ENCODE measurements at regions of chr2 and their contacts with region 1.

Region 1: DNA sequence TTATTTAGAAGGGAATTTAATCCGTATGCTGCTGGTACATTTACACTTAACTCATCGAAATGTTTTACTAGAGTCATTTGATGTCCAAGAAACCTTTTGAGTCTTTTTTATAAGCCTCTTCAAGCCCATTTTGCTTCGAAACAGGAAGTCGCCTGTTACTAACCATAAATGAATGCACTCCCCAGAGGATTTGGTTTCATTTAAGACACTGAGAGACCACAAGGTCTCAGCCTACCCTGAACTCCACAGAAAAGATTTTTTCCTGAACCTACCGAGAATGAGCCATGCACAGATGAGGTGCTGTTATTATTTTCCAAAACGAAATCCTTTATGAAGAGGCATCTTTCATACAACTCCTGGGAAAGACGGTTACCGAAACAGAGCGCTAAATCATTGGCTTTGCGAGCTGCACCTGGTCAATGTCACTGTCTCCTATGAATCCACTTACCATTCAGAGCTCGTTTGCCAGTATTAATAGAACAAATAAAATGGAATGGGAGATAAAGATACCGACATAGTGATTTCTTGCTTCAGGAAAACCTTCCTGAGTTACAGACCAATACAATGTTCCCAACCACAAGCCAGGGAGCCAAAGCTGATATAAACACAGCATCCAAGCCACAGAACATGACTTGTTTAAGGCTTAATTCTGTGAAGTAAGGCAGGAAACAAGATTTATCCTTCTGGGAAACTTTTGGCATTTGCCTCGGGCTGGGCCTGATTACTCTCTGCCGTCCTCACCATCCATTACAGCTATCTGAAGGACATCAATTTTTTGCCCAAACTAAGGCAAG is 382.1 kb downstream of the OSR1 start:
- DNase-seq: peak; percentile 75
- H3K4me3 ChIP-seq: peak overlapping the region in 3 of 4 donors; percentile 5 to 23 (median 7)
- H3K27ac ChIP-seq: peak overlapping the region; percentile 67 to 81 (median 77)
- H3K4me1 ChIP-seq: peaks cover 0 to 44% (median 37%) of the 10 kb centered on the region in 4 donors
- H3K27me3 ChIP-seq: no peaks in the 10 kb centered on the region
- CTCF ChIP-seq: no peak
- EP300 ChIP-seq: peak; percentile 0 to 75 (median 58)
- POLR2A ChIP-seq: no peak

Region 2: DNA sequence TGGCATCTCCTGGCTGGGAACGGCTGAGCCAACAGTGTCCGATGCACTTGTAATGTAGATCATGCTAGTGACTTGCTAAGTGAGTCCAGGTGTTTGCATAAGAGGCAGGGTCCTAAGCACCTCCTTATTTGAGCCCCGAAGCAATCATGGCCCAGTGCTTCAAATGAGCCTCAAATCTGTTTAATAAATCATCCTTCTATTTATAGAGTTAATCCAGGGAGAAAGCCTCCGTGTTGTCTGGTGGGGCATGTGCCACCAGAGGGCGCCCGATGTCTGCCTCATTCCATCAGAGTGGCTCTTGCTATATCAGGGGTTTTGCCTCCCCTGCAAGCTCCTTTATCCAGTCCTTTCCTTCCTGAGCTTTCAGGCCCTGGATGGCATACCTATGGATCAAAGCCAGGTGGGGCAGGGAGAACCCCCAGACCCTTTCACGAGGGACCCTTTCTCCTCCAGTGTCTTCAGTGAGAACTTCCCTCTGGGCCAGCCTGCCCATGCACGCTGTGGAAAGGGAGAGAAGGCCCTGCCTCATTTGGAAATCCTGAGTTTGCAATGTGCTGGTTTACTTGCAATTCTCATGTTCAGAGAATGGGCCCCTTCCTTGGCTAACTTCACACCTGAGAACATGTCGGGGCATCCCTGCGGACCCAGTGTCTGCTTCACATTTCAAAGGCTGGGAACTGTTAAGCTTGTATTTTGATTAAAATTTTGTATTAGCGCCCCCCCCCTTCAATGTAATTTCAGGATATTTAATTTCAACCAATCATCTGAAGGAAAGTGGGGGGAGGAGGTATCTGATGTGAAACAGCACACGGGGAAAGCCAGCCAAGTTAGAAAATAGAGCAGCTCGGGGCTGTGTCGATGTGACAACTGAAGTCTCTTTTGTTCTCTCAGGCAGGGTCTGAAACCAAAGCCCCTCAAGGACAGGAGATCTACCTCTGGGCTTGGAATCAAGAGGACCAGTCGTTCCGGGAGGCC is 455.6 kb before region 1 on chr2:
- intact Hi-C with region 1: loop called (anchors 5 kb)
- DNase-seq: peak; percentile 93
- H3K4me3 ChIP-seq: no peak overlapping the region
- H3K27ac ChIP-seq: peak overlapping the region; percentile 57 to 78 (median 73)
- H3K4me1 ChIP-seq: peaks cover 0 to 50% (median 48%) of the 10 kb centered on the region in 4 donors
- H3K27me3 ChIP-seq: no peaks in the 10 kb centered on the region
- CTCF ChIP-seq: peak; percentile 81 to 91 (median 88)
- EP300 ChIP-seq: no peak
- POLR2A ChIP-seq: no peak

Region 3: DNA sequence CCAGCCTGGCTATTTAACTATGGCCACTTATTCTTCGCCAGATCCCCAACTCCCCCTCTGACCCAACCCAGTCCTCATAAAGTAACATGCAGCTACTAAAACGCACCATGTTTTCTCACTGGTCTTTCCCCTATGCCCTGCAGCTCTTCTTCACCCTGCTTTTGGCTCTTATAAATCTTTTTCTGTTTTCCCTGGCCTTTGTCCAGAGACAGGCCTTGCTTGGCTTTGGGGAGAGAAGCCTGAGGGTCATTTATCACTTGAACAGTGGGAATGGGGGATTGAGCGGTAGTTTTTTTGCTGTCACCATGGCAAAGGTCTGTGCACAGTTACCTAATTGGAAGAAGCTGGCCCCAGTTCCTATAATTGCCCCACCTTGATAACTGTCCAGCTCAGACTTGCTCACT is 184.1 kb before region 1 on chr2:
- intact Hi-C with region 1: loop called (anchors 5 kb)
- DNase-seq: peak; percentile 64
- H3K4me3 ChIP-seq: no peak overlapping the region
- H3K27ac ChIP-seq: peak overlapping the region; percentile 53 to 72 (median 71)
- H3K4me1 ChIP-seq: peaks cover 0 to 41% (median 36%) of the 10 kb centered on the region in 4 donors
- H3K27me3 ChIP-seq: no peaks in the 10 kb centered on the region
- CTCF ChIP-seq: no peak
- EP300 ChIP-seq: no peak
- POLR2A ChIP-seq: no peak

Region 4: DNA sequence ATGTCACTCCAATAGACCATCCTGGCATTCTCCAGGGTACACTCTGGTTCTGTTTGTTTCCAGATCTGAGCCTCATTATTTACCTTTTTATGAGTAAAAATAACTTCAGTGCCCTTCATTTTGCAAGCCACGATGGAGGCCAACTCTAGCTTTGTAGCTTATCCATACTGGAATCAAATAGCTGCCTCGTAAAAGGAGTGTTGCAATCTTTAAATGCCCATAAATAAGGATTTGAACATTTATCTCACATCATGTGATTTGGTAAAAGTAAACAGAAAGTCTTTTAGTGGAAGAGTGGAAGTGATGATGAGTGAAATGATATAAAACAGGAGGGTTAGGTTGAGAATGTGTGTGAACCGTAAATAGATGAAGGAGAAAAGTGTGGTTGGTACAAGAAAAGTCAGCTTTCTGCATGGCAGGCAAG is 33.1 kb after region 1 on chr2:
- intact Hi-C with region 1: loop called (anchors 2 kb)
- DNase-seq: no peak
- H3K4me3 ChIP-seq: no peak overlapping the region
- H3K27ac ChIP-seq: peak overlapping the region in 3 of 4 donors; percentile 5 to 15 (median 8)
- H3K4me1 ChIP-seq: peaks cover 0 to 13% (median 0%) of the 10 kb centered on the region in 4 donors
- H3K27me3 ChIP-seq: no peaks in the 10 kb centered on the region
- CTCF ChIP-seq: no peak
- EP300 ChIP-seq: peak in 3 of 4 donors; percentile 34 to 53 (median 38)
- POLR2A ChIP-seq: no peak

Region 5: GRCh38 chr2:19670303-19670702 is 693.9 kb after region 1 on chr2:
- intact Hi-C with region 1: loop called (anchors 2 kb)
- DNase-seq: no peak
- H3K4me3 ChIP-seq: no peak overlapping the region
- H3K27ac ChIP-seq: peak overlapping the region in 2 of 4 donors; percentile 8 to 28
- H3K4me1 ChIP-seq: peaks cover 0 to 21% (median 18%) of the 10 kb centered on the region in 4 donors
- H3K27me3 ChIP-seq: peaks cover 0 to 5% (median 0%) of the 10 kb centered on the region in 3 donors
- CTCF ChIP-seq: no peak
- EP300 ChIP-seq: peak in 3 of 4 donors; percentile 21 to 73 (median 26)
- POLR2A ChIP-seq: no peak